ENCODE measurements at regions of chr3 and their contacts with region 1.

Region 1: DNA sequence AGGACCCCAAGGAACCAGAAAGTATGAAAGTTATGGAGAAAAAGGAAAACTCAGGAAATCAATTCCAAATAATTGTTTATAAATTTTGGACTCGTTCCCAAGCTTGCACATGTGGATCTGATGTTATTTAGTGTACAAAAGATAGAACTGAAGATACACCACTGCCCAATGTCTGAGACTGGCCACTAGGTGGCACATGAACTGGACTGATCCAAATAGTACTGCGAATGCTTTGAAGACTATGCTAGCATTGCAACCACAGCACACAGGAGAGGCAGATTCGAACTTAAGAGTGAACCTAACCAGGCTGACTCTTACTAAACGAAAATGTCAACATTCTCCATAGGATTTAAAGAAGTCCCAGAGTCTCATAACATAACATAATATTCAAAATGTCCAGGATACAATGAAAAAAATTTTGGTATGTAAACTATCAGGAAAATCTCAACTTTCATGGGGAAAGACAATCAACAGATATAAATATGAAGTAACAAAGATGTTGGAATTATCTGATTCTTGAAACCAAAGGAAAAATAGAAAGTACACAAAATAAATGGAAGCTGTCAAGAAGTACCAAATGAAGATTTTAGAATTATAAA is 596.7 kb downstream of the FGF12 start:
- DNase-seq: peak in 4 of 5 donors; percentile 19 to 48 (median 43)
- ATAC-seq: peak in 3 of 4 donors; percentile 77 to 87 (median 81)
- H3K4me3 ChIP-seq: no peak overlapping the region
- H3K27ac ChIP-seq: no peak overlapping the region
- H3K4me1 ChIP-seq: no peaks in the 10 kb centered on the region
- H3K27me3 ChIP-seq: no peaks in the 10 kb centered on the region
- CTCF ChIP-seq: peak; percentile 64 to 83 (median 74)
- POLR2A ChIP-seq: no peak

Region 2: GRCh38 chr3:191425322-191425734 is 705.3 kb before region 1 on chr3:
- intact Hi-C with region 1: loop called in 2 of 10 experiments (anchors 5 to 10 kb)
- DNase-seq: no peak
- ATAC-seq: no peak
- H3K4me3 ChIP-seq: peak overlapping the region in 5 of 12 donors; percentile 5 to 32 (median 11)
- H3K27ac ChIP-seq: no peak overlapping the region
- H3K4me1 ChIP-seq: no peaks in the 10 kb centered on the region
- H3K27me3 ChIP-seq: no peaks in the 10 kb centered on the region
- CTCF ChIP-seq: no peak
- POLR2A ChIP-seq: no peak

Region 3: GRCh38 chr3:192188218-192188835 is 57.7 kb after region 1 on chr3:
- intact Hi-C with region 1: loop called in 1 of 10 experiments (anchors 10 kb)
- DNase-seq: peak in 4 of 5 donors; percentile 22 to 52 (median 30)
- ATAC-seq: peak in 1 of 4 donors; percentile 27
- H3K4me3 ChIP-seq: no peak overlapping the region
- H3K27ac ChIP-seq: no peak overlapping the region
- H3K4me1 ChIP-seq: peaks cover 0 to 9% (median 2%) of the 10 kb centered on the region in 12 donors
- H3K27me3 ChIP-seq: no peaks in the 10 kb centered on the region
- CTCF ChIP-seq: peak; percentile 45 to 69 (median 60)
- POLR2A ChIP-seq: no peak

Region 4: GRCh38 chr3:192336287-192336686 is 205.7 kb after region 1 on chr3:
- intact Hi-C with region 1: no loop called
- DNase-seq: no peak
- ATAC-seq: no peak
- H3K4me3 ChIP-seq: no peak overlapping the region
- H3K27ac ChIP-seq: no peak overlapping the region
- H3K4me1 ChIP-seq: peaks cover 0 to 16% (median 3%) of the 10 kb centered on the region in 12 donors
- H3K27me3 ChIP-seq: no peaks in the 10 kb centered on the region
- CTCF ChIP-seq: peak in 2 of 12 donors; percentile 8 to 12
- POLR2A ChIP-seq: no peak

Region 5: DNA sequence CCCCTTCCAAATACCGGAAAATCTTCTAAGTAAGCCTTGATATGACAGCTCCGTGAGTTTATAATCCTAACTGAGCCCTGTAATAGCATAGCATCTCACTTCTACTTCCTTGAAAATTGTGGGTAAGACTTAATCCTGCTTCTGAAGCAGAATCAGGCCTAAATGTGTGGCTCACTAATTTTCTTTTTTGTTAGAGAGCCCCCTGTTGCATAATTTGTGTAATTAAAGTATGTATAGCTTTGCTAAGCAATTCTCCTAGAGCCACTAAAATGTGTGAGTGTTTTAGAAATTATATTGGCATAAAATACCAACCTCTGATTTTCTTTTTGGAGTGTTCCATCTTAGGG is 292.3 kb after region 1 on chr3:
- intact Hi-C with region 1: loop called in 3 of 10 experiments (anchors 2 to 5 kb)
- DNase-seq: no peak
- ATAC-seq: peak in 1 of 4 donors; percentile 38
- H3K4me3 ChIP-seq: no peak overlapping the region
- H3K27ac ChIP-seq: no peak overlapping the region
- H3K4me1 ChIP-seq: peaks cover 0 to 7% (median 0%) of the 10 kb centered on the region in 12 donors
- H3K27me3 ChIP-seq: no peaks in the 10 kb centered on the region
- CTCF ChIP-seq: peak in 9 of 12 donors; percentile 11 to 61 (median 32)
- POLR2A ChIP-seq: no peak

Region 6: GRCh38 chr3:192444096-192444790 is 313.6 kb after region 1 on chr3:
- intact Hi-C with region 1: loop called (anchors 1 to 10 kb)
- DNase-seq: peak; percentile 33 to 76 (median 44)
- ATAC-seq: peak; percentile 48 to 75 (median 72)
- H3K4me3 ChIP-seq: no peak overlapping the region
- H3K27ac ChIP-seq: no peak overlapping the region
- H3K4me1 ChIP-seq: peaks cover 0 to 26% (median 8%) of the 10 kb centered on the region in 12 donors
- H3K27me3 ChIP-seq: peaks cover 0 to 10% (median 0%) of the 10 kb centered on the region in 9 donors
- CTCF ChIP-seq: peak; percentile 95 to 100 (median 98)
- POLR2A ChIP-seq: no peak

Measured in heart left ventricle (tissue), 16 donors.